ENCODE measurements at regions of chr17 and their contacts with region 1.

Region 1: DNA sequence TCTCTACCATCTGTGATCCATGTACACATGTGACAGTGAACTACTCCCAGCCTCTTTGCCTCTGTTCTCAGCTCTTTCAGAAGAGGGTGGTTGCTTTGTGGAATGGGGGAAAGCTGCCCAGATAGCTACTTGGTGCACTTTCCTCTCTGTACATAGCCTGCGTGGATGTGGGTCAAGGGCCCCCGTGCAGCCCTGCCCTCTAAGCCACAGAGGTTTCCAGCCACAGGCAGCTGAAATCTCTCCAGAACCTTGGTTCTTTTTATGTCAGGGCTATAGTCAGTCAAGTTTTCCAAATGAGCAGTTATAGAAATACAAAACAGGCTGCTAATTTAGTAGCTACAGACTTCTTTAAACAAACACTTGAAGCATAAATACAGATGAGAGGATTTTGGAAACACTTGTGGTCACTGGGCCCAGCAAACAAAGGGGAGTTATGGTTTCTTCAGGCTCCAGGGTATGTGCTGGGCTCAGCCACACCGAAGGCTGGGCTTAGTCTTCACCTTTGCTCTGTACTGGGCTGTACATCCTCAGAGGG is 199.7 kb upstream of the ASIC2 start:
- DNase-seq: no peak
- ATAC-seq: no peak
- H3K4me3 ChIP-seq: no peak overlapping the region
- H3K27ac ChIP-seq: no peak overlapping the region
- H3K4me1 ChIP-seq: no peaks in the 10 kb centered on the region
- H3K27me3 ChIP-seq: peaks cover 3% of the 10 kb centered on the region
- CTCF ChIP-seq: no peak

Region 2: DNA sequence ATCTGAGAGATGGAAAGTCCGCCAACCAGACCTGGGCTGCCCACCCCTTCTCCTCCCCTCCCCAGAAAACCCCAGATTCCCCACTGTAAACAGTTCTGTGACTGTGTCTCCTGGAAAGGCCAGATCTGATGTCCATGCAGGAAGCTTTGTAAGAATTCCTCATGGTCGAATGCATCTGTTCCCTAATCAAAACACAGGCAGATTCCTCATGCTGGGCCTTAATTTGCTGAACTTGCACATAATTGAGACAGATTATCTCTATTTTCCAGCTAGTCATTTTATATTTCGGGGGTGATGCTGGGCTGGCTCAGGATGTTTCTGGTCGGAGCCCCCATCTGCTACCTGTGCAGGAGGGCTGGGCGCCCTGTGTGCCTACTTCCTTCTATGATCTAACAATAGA is 33.9 kb after region 1 on chr17:
- CTCF ChIA-PET with region 1: interaction called, 17 read pairs
- POLR2A ChIA-PET with region 1: no interaction called
- in situ Hi-C with region 1: no loop called
- intact Hi-C with region 1: no loop called
- DNase-seq: no peak
- ATAC-seq: no peak
- H3K4me3 ChIP-seq: no peak overlapping the region
- H3K27ac ChIP-seq: no peak overlapping the region
- H3K4me1 ChIP-seq: no peaks in the 10 kb centered on the region
- H3K27me3 ChIP-seq: no peaks in the 10 kb centered on the region; the same call in 1 of the 2 replicates
- CTCF ChIP-seq: no peak

Measured in Panc1 (cell line).